RWPE1 (cell line): ENCODE measurements at regions of chr15 and their contacts with region 1.

Region 1: GRCh38 chr15:45166834-45167630 is 20.7 kb downstream of the SHF start:
- DNase-seq: peak; percentile 78
- H3K27ac ChIP-seq: peak overlapping the region; percentile 91
- CTCF ChIP-seq: peak; percentile 86

Region 2: DNA sequence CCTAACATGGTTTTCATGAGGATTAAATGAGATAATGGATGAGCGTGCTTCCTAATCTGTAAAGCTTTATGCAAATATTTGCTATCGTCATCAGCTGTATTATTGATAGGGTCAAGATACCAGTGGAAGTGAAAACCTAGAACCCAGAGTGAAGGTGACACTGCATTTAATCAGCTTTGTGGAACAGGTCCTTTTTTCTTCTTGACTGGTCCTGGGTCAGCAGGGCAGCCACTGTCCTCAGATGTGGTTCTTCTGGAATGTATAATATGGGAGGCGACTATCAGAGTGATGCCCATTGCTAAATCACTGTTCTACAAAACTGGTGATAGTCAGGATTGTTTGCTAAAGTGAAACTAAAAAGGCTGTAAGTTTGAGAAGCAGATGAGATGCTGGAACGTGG is 102.6 kb before region 1 on chr15:
- CTCF ChIA-PET with region 1: interaction called, 10 read pairs
- POLR2A ChIA-PET with region 1: no interaction called
- DNase-seq: no peak
- H3K27ac ChIP-seq: no peak overlapping the region
- CTCF ChIP-seq: no peak

Region 3: GRCh38 chr15:45106002-45106790 is 60.8 kb before region 1 on chr15:
- CTCF ChIA-PET with region 1: no interaction called
- POLR2A ChIA-PET with region 1: no interaction called
- DNase-seq: no peak
- H3K27ac ChIP-seq: no peak overlapping the region
- CTCF ChIP-seq: no peak

Region 4: DNA sequence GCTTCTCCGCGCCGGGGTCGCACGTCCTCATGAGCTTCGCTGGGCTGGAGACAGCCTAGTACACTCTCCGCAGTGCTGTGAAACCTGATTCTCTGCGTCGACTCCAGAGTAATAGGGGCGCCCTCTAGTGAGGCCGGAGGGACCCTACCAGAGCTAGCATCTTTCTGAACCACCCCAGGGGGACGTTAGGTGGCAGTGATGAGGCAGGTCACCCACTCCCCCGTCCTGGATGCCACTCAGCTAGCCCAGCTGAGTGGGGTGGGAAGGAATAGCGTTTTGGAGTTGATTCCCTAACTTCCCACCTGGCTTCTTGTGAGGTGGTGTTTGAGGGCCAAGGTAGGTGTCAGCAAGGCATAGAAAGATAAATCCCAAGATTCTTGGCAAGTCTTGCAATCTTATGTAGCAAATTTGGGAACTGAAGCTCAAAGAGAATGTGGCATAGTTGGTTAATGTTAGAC is 48.9 kb before region 1 on chr15:
- CTCF ChIA-PET with region 1: interaction called, 11 read pairs
- POLR2A ChIA-PET with region 1: no interaction called
- DNase-seq: peak; percentile 95
- H3K27ac ChIP-seq: no peak overlapping the region
- CTCF ChIP-seq: peak; percentile 99

Region 5: GRCh38 chr15:45129651-45130191 is 37.3 kb before region 1 on chr15 and contains the starts of genes DUOX1 and DUOXA1:
- CTCF ChIA-PET with region 1: interaction called, 11 read pairs
- POLR2A ChIA-PET with region 1: interaction called, 3 read pairs
- DNase-seq: peak; percentile 85
- H3K27ac ChIP-seq: peak within 1 kb of the TSS; percentile 70
- CTCF ChIP-seq: no peak

Region 6: GRCh38 chr15:45205192-45205591 is 38.2 kb after region 1 on chr15:
- CTCF ChIA-PET with region 1: interaction called, 13 read pairs
- POLR2A ChIA-PET with region 1: no interaction called
- DNase-seq: peak; percentile 71
- H3K27ac ChIP-seq: no peak overlapping the region
- CTCF ChIP-seq: peak; percentile 64